GM12878 (cell line): ENCODE measurements at regions of chr1 and their contacts with region 1.

Region 1: DNA sequence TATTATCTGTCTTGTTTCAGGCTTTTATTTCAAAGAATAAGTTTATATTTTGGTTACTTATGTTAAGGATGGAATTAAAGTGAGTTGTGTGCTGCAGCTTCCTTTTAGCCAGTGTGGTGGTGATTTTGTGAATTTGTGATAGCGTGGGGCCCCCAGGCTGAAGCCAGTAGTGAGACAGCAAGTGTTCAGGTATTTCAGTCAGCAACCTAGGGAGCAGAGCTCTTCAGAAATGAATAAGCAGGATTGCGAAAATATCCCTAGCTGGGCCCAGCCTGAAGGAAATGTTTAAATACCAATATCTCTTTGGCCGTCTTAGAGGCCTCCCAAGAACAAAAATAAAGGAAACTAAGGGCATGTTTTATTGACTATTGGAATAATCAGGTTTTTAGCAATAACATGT is 150.8 kb upstream of the C1orf105 start:
- DNase-seq: no peak
- ATAC-seq: no peak
- H3K4me3 ChIP-seq: no peak overlapping the region
- H3K27ac ChIP-seq: no peak overlapping the region
- H3K4me1 ChIP-seq: peaks cover 19% of the 10 kb centered on the region
- H3K27me3 ChIP-seq: no peaks in the 10 kb centered on the region
- CTCF ChIP-seq: no peak
- EP300 ChIP-seq: no peak
- POLR2A ChIP-seq: no peak
- RAD21 ChIP-seq: no peak

Region 2: GRCh38 chr1:172254521-172255222 is 15.0 kb before region 1 on chr1:
- CTCF ChIA-PET with region 1: interaction called, 4 read pairs
- POLR2A ChIA-PET with region 1: interaction called, 4 read pairs
- RAD21 ChIA-PET with region 1: no interaction called
- SMC1A ChIA-PET with region 1: interaction called, 11 read pairs
- in situ Hi-C with region 1: no loop called
- intact Hi-C with region 1: no loop called
- DNase-seq: no peak
- ATAC-seq: peak; percentile 51
- H3K4me3 ChIP-seq: no peak overlapping the region
- H3K27ac ChIP-seq: no peak overlapping the region
- H3K4me1 ChIP-seq: peaks cover 8% of the 10 kb centered on the region; the same call in 1 of the 2 replicates
- H3K27me3 ChIP-seq: no peaks in the 10 kb centered on the region
- CTCF ChIP-seq: no peak
- EP300 ChIP-seq: no peak
- POLR2A ChIP-seq: no peak
- RAD21 ChIP-seq: no peak

Region 3: DNA sequence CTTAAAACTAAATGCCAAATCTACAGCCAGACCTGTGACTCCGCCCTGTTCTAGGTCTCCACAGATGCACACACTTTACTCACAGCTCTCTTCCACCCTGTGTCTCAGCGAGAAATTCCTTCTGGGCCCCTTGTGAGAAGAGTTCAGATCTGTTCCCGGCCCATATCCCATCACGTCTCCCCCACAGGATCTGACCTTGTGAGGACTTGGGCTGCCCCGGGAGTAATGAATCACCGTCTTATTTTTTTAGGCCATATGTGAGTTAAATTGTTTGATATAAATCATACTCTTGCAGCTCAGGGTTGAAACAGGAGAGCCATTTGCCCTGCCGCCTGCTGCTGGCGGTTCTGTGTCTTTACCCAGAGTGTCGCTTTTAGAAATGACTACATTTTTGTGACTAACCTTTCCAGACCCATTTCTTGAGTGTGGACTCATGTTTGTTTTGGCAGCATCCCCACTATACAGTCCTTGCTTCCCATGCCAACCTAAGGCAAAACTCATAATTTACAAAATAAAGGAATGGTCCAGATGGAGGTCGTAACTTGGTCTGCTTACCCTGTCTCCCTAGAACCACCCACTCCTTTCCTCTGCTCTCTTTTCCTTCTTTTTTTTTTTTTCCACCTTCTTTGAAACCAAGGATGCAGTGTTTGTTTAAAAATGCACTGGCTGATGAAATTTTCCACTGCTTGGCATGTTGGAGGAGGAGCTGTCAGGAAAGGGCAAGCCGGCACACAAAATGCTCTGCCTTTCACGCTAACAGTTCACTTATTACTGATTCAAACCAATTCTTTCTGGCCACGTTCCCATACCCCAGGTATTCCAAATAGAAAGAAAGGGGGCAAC is 52.8 kb after region 1 on chr1:
- CTCF ChIA-PET with region 1: no interaction called
- POLR2A ChIA-PET with region 1: no interaction called
- RAD21 ChIA-PET with region 1: no interaction called
- SMC1A ChIA-PET with region 1: no interaction called
- in situ Hi-C with region 1: no loop called
- intact Hi-C with region 1: no loop called
- DNase-seq: no peak
- ATAC-seq: no peak
- H3K4me3 ChIP-seq: no peak overlapping the region
- H3K27ac ChIP-seq: no peak overlapping the region
- H3K4me1 ChIP-seq: no peaks in the 10 kb centered on the region
- H3K27me3 ChIP-seq: no peaks in the 10 kb centered on the region
- CTCF ChIP-seq: no peak
- EP300 ChIP-seq: no peak
- POLR2A ChIP-seq: no peak
- RAD21 ChIP-seq: no peak